OCI-LY7 (cell line): ENCODE measurements at regions of chrX and their contacts with region 1.

Region 1: DNA sequence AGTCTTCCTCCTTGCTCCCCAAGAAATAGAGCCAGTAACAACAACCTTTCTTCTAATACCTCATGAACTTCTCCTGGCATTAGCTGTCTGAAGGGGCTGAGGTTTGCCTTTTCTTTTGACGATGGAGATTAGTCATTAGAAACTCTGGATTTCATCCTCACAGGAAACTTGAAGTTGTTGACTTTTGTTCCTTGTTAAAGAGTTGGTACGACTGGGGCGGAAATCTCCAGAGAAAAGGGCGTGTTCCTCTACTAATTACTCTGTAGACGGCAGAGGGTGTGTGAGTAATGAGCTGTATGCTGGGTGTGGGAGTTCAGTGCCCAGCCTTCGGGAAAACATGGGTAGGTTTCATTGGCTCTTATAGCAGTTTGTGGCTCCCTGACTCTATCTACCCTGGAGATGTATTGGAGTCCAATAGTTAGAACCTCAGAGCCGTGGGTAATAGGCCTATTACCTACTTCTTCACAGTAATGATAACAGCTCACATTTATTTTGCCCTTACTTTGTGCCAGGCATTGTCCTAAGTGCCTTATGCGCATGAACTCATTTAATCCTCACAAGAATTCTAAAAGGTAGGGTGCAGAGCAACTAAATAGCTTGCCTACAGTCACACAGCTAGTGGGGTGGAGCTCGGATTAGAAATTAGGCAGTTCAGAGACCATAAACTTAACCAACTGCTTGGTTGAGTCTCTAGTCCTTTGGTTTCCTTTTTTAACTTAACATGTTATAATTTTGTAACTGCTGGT is 23.4 kb downstream of the TMEM164 start:
- DNase-seq: no peak
- H3K4me3 ChIP-seq: no peak overlapping the region
- H3K27ac ChIP-seq: no peak overlapping the region
- H3K4me1 ChIP-seq: no peaks in the 10 kb centered on the region
- CTCF ChIP-seq: no peak

Region 2: DNA sequence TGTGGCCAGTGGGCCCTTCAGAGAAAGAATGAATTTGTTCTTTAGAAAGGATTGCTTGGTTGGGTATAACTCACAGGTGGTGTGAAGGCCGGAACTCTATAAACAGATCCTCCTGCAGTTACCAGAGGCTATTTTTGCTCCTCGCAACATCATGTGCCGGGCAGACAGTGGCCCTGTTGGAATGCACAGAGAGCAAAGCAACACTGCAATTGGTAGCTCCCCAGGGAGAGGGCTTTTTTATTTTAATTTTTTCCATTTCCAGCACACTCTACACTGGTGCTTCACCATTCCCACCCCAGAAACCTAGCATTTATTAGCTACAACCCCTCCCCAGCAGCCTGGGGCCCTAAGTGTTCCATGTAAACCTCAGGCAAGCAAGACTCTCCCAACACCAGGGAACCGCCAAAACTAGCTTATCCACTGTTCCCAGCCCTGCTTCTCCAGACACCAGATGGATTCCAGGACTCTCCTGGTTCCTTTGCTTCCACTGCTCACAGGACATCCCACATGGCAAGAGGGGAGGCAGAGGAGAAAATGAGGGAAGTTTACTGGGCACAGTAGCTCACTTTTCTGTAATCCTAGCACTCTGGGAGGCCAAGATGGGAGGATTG is 98.5 kb before region 1 on chrX:
- CTCF ChIA-PET with region 1: no interaction called
- POLR2A ChIA-PET with region 1: no interaction called
- intact Hi-C with region 1: no loop called
- DNase-seq: no peak
- H3K4me3 ChIP-seq: no peak overlapping the region
- H3K27ac ChIP-seq: no peak overlapping the region
- H3K4me1 ChIP-seq: no peaks in the 10 kb centered on the region
- CTCF ChIP-seq: no peak

Region 3: GRCh38 chrX:110044346-110045249 is 18.3 kb after region 1 on chrX:
- CTCF ChIA-PET with region 1: no interaction called
- POLR2A ChIA-PET with region 1: interaction called, 13 read pairs
- intact Hi-C with region 1: no loop called
- DNase-seq: no peak
- H3K4me3 ChIP-seq: no peak overlapping the region
- H3K27ac ChIP-seq: no peak overlapping the region
- H3K4me1 ChIP-seq: no peaks in the 10 kb centered on the region
- CTCF ChIP-seq: no peak

Region 4: GRCh38 chrX:110614596-110614995 is 588.3 kb after region 1 on chrX:
- CTCF ChIA-PET with region 1: no interaction called
- POLR2A ChIA-PET with region 1: no interaction called
- intact Hi-C with region 1: no loop called
- DNase-seq: no peak
- H3K4me3 ChIP-seq: no peak overlapping the region
- H3K27ac ChIP-seq: no peak overlapping the region
- H3K4me1 ChIP-seq: no peaks in the 10 kb centered on the region
- CTCF ChIP-seq: no peak